ENCODE measurements at regions of chr20 and their contacts with region 1.

Region 1: GRCh38 chr20:2289471-2289872 is 6.3 kb upstream of the TGM3 start:
- H3K4me3 Mint-ChIP-seq: peak overlapping the region; percentile 30
- H3K27ac Mint-ChIP-seq: peak overlapping the region; percentile 64
- H3K4me1 Mint-ChIP-seq: peaks cover 56% of the 10 kb centered on the region
- H3K27me3 Mint-ChIP-seq: peaks cover 9% of the 10 kb centered on the region

Region 2: GRCh38 chr20:2279253-2279779 is 10.2 kb before region 1 on chr20:
- intact Hi-C with region 1: no loop called
- H3K4me3 Mint-ChIP-seq: no peak overlapping the region
- H3K27ac Mint-ChIP-seq: no peak overlapping the region
- H3K4me1 Mint-ChIP-seq: peaks cover 21% of the 10 kb centered on the region
- H3K27me3 Mint-ChIP-seq: peaks cover 6% of the 10 kb centered on the region

Region 3: GRCh38 chr20:2301164-2301622 is 11.7 kb after region 1 on chr20:
- intact Hi-C with region 1: loop called (anchors 1 kb)
- H3K4me3 Mint-ChIP-seq: no peak overlapping the region
- H3K27ac Mint-ChIP-seq: peak overlapping the region; percentile 80
- H3K4me1 Mint-ChIP-seq: peaks cover 52% of the 10 kb centered on the region
- H3K27me3 Mint-ChIP-seq: peaks cover 5% of the 10 kb centered on the region

Region 4: DNA sequence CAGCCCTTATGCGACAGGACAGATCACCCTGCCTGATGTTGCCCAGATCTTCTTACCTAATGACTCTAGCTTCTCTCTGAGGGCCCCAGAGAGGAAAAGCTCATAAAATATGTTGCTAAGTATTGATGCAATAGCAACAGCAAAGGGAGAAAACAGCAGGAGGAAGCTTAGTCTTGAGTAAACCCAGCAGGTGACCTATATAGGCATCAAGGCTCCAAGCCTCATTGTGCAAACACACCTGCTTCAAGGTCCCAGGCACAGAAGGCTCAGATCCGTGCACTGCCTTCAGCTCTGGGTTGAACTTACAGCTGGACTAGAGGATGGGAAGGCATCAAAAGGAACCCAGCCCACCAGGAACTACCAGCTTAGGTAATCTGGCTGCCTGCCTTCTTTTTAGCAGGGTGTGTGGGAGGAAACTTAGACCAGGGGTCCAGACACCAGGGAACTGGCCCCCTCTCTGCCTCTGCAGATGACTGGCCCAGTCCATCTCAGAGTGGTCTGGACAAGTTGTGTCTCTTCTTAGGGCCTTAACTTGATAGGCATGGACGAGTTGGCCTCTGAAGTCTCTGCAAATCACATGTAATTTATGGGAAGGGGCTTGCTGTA is 40.7 kb after region 1 on chr20:
- intact Hi-C with region 1: loop called (anchors 10 kb)
- H3K4me3 Mint-ChIP-seq: no peak overlapping the region
- H3K27ac Mint-ChIP-seq: no peak overlapping the region
- H3K4me1 Mint-ChIP-seq: peaks cover 18% of the 10 kb centered on the region
- H3K27me3 Mint-ChIP-seq: peaks cover 60% of the 10 kb centered on the region